Gastrocnemius medialis (tissue), 4 donors: ENCODE measurements at regions of chr7 and their contacts with region 1.

Region 1: DNA sequence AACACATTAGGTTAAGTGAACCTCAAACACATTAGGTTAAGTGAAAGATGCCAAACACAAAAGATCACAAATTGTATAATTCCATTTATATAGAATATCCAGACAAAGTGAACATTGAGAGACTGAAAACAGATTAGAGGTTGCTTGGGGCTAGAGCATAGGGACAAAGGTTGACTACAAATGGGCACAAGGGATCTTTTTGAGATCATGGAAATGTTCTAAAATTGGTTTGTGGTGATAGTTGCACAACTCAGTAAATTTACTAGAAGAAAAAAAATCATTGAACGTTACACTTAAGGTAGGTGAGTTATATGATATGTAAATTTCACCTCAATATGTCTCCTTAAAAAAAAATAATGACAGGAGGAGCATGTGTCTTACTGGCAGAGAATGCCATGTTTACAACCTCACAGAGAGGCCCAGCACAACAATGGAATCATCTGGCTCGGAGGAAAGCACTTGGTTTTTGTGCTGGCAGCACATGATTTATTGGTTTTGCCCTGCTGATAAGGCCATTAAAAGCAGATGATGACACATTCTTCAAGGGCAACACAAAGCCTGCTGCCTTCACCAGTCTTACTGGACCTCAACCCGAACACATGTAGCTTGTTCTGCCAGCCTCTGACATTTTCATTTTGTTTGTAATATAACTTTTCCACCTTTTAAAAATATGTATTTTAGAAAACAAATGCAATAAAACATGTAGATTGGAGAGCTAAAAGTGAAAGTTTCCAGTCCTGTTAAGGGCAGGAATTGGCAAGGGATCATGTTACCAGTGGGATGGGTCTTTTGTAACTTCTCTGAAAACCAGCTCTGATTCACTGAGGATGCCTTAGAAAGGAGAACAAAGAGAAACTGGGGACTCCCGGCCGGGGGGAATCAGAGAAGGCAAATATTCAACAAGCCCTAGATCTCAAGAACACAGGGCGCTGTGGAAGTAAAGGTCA is 11.9 kb upstream of the LMOD2 start:
- DNase-seq: peak; percentile 74 to 81
- ATAC-seq: peak; percentile 62 to 72
- H3K4me3 ChIP-seq: peak overlapping the region; percentile 23 to 46 (median 34)
- H3K27ac ChIP-seq: peak overlapping the region; percentile 82 to 96 (median 87)
- H3K4me1 ChIP-seq: peaks cover 69 to 76% of the 10 kb centered on the region in 2 donors
- H3K27me3 ChIP-seq: no peaks in the 10 kb centered on the region
- CTCF ChIP-seq: no peak
- POLR2A ChIP-seq: peak; percentile 51 to 80

Region 2: GRCh38 chr7:123608991-123609882 is 34.5 kb before region 1 on chr7:
- in situ Hi-C with region 1: no loop called
- intact Hi-C with region 1: loop called (anchors 2 kb)
- DNase-seq: peak; percentile 57 to 83
- ATAC-seq: peak; percentile 93 to 96
- H3K4me3 ChIP-seq: peak overlapping the region; percentile 36 to 46 (median 40)
- H3K27ac ChIP-seq: peak overlapping the region; percentile 91 to 93 (median 92)
- H3K4me1 ChIP-seq: peaks cover 36 to 55% of the 10 kb centered on the region in 2 donors
- H3K27me3 ChIP-seq: no peaks in the 10 kb centered on the region
- CTCF ChIP-seq: no peak
- POLR2A ChIP-seq: peak; percentile 21 to 57

Region 3: DNA sequence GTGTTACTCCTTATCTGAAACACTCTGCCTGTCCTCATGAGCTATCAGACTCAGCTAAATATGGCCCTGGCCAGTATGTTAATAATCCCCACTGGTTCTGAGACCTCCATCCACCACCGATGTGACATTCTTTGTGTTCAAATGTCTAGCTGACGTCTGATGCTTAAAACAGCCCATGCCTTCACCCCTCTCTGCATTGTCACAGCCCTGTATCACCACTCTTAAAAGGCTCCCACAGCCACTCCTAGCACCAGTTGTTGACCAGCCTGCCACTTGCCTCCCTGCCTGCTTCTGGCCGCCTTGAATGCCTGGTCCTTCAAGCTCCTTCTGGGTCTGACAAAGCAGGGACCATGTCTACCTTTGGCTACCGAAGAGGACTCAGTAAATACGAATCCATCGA is 11.8 kb after region 1 on chr7 and contains the start of gene LMOD2:
- in situ Hi-C with region 1: no loop called
- intact Hi-C with region 1: loop called (anchors 2 kb)
- DNase-seq: peak; percentile 78 to 92
- ATAC-seq: peak; percentile 68 to 81
- H3K4me3 ChIP-seq: peak within 1 kb of the TSS; percentile 58 to 73 (median 71)
- H3K27ac ChIP-seq: peak within 1 kb of the TSS; percentile 88 to 96 (median 96)
- H3K4me1 ChIP-seq: peaks cover 31 to 54% of the 10 kb centered on the region in 2 donors
- H3K27me3 ChIP-seq: no peaks in the 10 kb centered on the region
- CTCF ChIP-seq: no peak
- POLR2A ChIP-seq: peak; percentile 86 to 95
- total RNA-seq, gene LMOD2: 150 to 518 (median 314) TPM

Region 4: GRCh38 chr7:123682690-123683089 is 38.9 kb after region 1 on chr7:
- in situ Hi-C with region 1: no loop called
- intact Hi-C with region 1: loop called (anchors 2 kb)
- DNase-seq: no peak
- ATAC-seq: no peak
- H3K4me3 ChIP-seq: no peak overlapping the region
- H3K27ac ChIP-seq: peak overlapping the region in 3 of 4 donors; percentile 75 to 85 (median 82)
- H3K4me1 ChIP-seq: peaks cover 47% of the 10 kb centered on the region in 2 donors
- H3K27me3 ChIP-seq: no peaks in the 10 kb centered on the region
- CTCF ChIP-seq: peak; percentile 35 to 59 (median 45)
- POLR2A ChIP-seq: no peak

Region 5: GRCh38 chr7:123715198-123715597 is 71.4 kb after region 1 on chr7:
- in situ Hi-C with region 1: no loop called
- intact Hi-C with region 1: no loop called
- DNase-seq: no peak
- ATAC-seq: no peak
- H3K4me3 ChIP-seq: no peak overlapping the region
- H3K27ac ChIP-seq: no peak overlapping the region
- H3K4me1 ChIP-seq: peaks cover 31 to 45% of the 10 kb centered on the region in 2 donors
- H3K27me3 ChIP-seq: no peaks in the 10 kb centered on the region
- CTCF ChIP-seq: no peak
- POLR2A ChIP-seq: no peak